HEK293 (cell line): ENCODE measurements at regions of chr14 and their contacts with region 1.

Region 1: GRCh38 chr14:66624299-66624937 is 116.5 kb downstream of the GPHN start:
- H3K4me3 ChIP-seq: no peak overlapping the region
- H3K27ac ChIP-seq: no peak overlapping the region
- H3K4me1 ChIP-seq: no peaks in the 10 kb centered on the region
- CTCF ChIP-seq: peak; percentile 29; the same call in 1 of the 2 replicates

Region 2: GRCh38 chr14:66163023-66163422 is 461.4 kb before region 1 on chr14:
- CTCF ChIA-PET with region 1: no interaction called
- POLR2A ChIA-PET with region 1: no interaction called
- H3K4me3 ChIP-seq: no peak overlapping the region
- H3K27ac ChIP-seq: no peak overlapping the region
- H3K4me1 ChIP-seq: no peaks in the 10 kb centered on the region
- CTCF ChIP-seq: no peak

Region 3: DNA sequence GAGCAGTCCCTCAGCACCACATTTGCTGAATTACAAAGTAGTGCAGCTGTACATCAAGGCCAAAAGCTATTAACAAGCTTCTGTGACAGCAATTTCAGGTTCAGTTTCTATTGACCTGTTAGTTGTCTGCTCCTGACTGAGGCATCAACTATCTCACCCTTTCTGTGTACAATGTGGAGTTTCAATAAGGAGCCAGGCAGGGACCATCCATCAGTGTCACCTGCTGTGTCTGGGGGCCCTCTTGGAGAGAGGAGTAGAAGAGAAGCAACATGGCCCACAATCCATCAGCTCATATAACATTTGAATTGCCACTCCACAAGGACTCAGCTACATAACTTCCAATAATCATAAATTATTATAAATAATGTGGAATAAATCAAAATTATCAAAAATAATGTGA is 210.5 kb before region 1 on chr14:
- CTCF ChIA-PET with region 1: no interaction called
- POLR2A ChIA-PET with region 1: no interaction called
- H3K4me3 ChIP-seq: no peak overlapping the region
- H3K27ac ChIP-seq: no peak overlapping the region
- H3K4me1 ChIP-seq: no peaks in the 10 kb centered on the region
- CTCF ChIP-seq: no peak

Region 4: GRCh38 chr14:66662374-66662773 is 38.0 kb after region 1 on chr14:
- CTCF ChIA-PET with region 1: interaction called, 20 read pairs
- POLR2A ChIA-PET with region 1: no interaction called
- H3K4me3 ChIP-seq: no peak overlapping the region
- H3K27ac ChIP-seq: no peak overlapping the region
- H3K4me1 ChIP-seq: no peaks in the 10 kb centered on the region
- CTCF ChIP-seq: no peak